ENCODE measurements at regions of chr1 and their contacts with region 1.

Region 1: DNA sequence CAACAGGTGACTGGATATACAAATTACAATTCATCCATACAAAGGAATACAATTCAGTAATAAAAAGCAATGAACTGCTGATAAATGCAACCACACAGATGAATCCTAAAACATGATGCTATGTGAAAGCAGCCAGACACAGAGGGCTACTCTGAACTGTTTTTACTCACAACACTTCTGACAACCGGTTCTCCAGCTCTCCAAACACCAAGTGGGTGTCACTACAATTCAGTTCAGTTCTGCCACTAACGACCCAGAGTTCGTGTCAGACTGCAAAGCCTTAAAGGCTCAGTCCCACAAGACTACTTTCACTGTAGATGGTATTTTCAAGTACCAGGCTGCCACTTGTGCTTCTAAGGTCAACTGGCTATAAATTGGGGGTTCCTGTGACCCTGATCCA is 119.4 kb downstream of the SLC16A1 start:
- DNase-seq: no peak
- ATAC-seq: no peak
- H3K4me3 ChIP-seq: no peak overlapping the region
- H3K27ac ChIP-seq: no peak overlapping the region
- H3K4me1 ChIP-seq: no peaks in the 10 kb centered on the region
- H3K27me3 ChIP-seq: no peaks in the 10 kb centered on the region
- CTCF ChIP-seq: no peak

Region 2: GRCh38 chr1:112849425-112850033 is 12.9 kb after region 1 on chr1:
- CTCF ChIA-PET with region 1: no interaction called
- POLR2A ChIA-PET with region 1: interaction called, 15 read pairs
- in situ Hi-C with region 1: no loop called
- intact Hi-C with region 1: no loop called
- DNase-seq: no peak
- ATAC-seq: peak; percentile 80
- H3K4me3 ChIP-seq: peak overlapping the region; percentile 44 to 47
- H3K27ac ChIP-seq: 0 out of 2 replicates have a peak overlapping the region, but pooled peaks have one; percentile 12
- H3K4me1 ChIP-seq: no peaks in the 10 kb centered on the region
- H3K27me3 ChIP-seq: no peaks in the 10 kb centered on the region
- CTCF ChIP-seq: no peak

Region 3: DNA sequence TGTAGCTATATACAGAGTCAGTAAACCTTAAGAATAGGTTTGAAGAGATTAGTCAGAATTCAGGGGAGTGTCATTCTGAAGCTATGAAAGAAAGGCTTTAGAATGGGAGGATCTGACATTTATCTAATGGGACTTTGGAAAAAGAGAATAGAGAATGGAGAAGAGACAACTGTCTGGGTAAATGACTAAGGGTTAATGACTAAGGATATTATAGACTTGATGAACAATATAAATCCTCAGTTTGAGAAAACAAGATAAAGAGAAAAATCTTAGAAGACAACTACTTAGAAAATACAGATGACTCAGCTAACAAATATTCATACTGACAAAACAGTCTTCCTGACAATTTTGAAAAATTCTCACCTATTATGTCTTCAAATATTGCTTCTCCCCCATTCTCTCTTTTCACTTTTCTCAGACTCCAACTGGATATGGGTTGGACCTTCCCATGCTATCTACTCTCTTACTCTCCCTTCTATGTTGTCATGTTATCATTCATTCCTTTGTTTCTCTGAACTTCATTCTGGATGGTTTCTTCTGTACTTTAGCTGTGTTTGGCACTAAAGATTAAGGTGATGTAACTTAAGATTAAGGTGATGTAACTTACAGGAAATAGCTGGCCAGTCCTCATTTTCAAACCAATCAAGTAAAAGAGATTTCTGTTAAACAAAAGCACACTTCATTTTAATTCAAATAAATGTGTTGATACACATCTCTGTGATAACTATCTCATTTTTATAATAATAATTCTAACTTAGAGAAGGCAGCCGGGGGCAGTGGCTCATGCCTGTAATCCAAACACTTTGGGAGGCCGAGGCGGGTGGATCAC is 99.0 kb after region 1 on chr1:
- CTCF ChIA-PET with region 1: no interaction called
- POLR2A ChIA-PET with region 1: no interaction called
- in situ Hi-C with region 1: no loop called
- intact Hi-C with region 1: no loop called
- DNase-seq: no peak
- ATAC-seq: no peak
- H3K4me3 ChIP-seq: no peak overlapping the region
- H3K27ac ChIP-seq: peak overlapping the region; percentile 39; the same call in 1 of the 2 replicates
- H3K4me1 ChIP-seq: peaks cover 6% of the 10 kb centered on the region
- H3K27me3 ChIP-seq: no peaks in the 10 kb centered on the region
- CTCF ChIP-seq: no peak